Naive thymus-derived CD4-positive, alpha-beta T cell (primary cell): ENCODE measurements at regions of chr1 and their contacts with region 1.

Region 1: GRCh38 chr1:31548907-31549808 is 27.2 kb upstream of the TINAGL1 start:
- DNase-seq: peak; percentile 59 to 89 (median 79)
- ATAC-seq: peak; percentile 99
- H3K4me3 ChIP-seq: no peak overlapping the region
- H3K4me3 Mint-ChIP-seq: peak overlapping the region; percentile 36 to 74 (median 60)
- H3K27ac ChIP-seq: no peak overlapping the region
- H3K27ac Mint-ChIP-seq: peak overlapping the region in 3 of 9 donors; percentile 23 to 68 (median 58)
- H3K4me1 ChIP-seq: peaks cover 5 to 7% of the 10 kb centered on the region in 2 donors
- H3K4me1 Mint-ChIP-seq: peaks cover 0 to 13% (median 9%) of the 10 kb centered on the region in 7 donors
- H3K27me3 ChIP-seq: no peaks in the 10 kb centered on the region
- H3K27me3 Mint-ChIP-seq: peaks cover 5 to 15% (median 13%) of the 10 kb centered on the region in 5 donors

Region 2: DNA sequence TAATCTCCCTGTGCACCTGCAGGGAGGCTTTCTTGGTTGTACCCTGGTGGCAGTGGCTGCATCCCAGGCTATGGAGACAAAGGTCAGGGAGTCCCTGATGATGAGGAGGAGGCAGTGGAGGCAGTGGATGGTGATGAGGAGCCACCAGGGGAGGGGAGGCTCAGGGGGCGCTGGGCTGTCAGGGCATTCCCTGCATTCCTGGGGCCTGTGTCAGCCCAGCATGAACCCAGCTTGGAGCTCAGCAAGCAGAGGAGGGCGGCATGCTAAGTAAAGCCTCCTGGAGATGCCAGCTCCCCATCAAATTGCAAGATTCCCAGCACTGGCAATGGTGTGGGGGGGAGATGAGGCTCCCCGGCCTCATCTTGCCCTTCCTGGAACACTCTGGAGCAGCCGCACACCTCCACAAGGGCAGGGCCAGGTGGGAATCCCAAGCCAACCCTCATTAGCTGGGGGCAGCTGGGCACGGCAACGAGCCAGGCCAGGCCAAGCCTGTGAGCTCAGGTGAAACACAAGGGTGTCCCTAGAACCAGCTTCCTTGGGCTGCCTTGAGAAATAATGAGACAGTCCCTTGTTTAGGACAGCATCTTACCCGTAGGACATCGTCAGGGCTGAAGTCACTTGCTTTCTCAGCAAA is 1295.2 kb before region 1 on chr1:
- CTCF ChIA-PET with region 1: no interaction called
- POLR2A ChIA-PET with region 1: no interaction called
- intact Hi-C with region 1: no loop called
- DNase-seq: no peak
- ATAC-seq: no peak
- H3K4me3 ChIP-seq: no peak overlapping the region
- H3K4me3 Mint-ChIP-seq: no peak overlapping the region
- H3K27ac ChIP-seq: no peak overlapping the region
- H3K27ac Mint-ChIP-seq: no peak overlapping the region
- H3K4me1 ChIP-seq: no peaks in the 10 kb centered on the region
- H3K4me1 Mint-ChIP-seq: no peaks in the 10 kb centered on the region
- H3K27me3 ChIP-seq: no peaks in the 10 kb centered on the region
- H3K27me3 Mint-ChIP-seq: peaks cover 4 to 32% (median 9%) of the 10 kb centered on the region in 5 donors

Region 3: DNA sequence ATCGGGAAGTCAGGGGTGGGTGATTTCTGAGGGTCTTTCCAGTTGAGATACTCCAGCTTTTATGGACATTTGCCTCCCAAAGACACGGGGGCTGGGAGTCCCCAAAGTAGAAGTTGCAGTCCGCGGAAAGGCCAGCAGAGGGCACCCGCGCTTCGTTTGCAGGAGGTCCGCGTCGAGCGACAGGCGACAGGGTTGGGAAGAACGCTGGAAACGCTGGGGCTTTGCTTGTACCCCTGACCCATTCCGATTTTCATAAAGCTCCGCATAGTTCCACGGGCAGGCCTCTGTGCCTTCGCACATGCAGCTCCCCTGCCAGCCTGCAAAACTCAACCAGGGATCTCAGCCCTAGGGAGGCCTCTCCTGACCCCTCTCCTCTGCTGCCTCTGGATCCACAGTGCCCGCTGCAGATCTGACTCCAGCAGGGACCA is 747.4 kb before region 1 on chr1:
- CTCF ChIA-PET with region 1: no interaction called
- POLR2A ChIA-PET with region 1: no interaction called
- intact Hi-C with region 1: loop called in 1 of 2 experiments (anchors 1 kb)
- DNase-seq: peak; percentile 47 to 85 (median 70)
- ATAC-seq: peak; percentile 85
- H3K4me3 ChIP-seq: no peak overlapping the region
- H3K4me3 Mint-ChIP-seq: peak overlapping the region in 4 of 10 donors; percentile 25 to 66 (median 42)
- H3K27ac ChIP-seq: no peak overlapping the region
- H3K27ac Mint-ChIP-seq: peak overlapping the region in 1 of 9 donors; percentile 69
- H3K4me1 ChIP-seq: no peaks in the 10 kb centered on the region
- H3K4me1 Mint-ChIP-seq: peaks cover 0 to 9% (median 4%) of the 10 kb centered on the region in 7 donors
- H3K27me3 ChIP-seq: peaks cover 0 to 5% of the 10 kb centered on the region in 2 donors
- H3K27me3 Mint-ChIP-seq: peaks cover 25 to 48% (median 29%) of the 10 kb centered on the region in 5 donors

Region 4: GRCh38 chr1:31166462-31166861 is 382.7 kb before region 1 on chr1:
- CTCF ChIA-PET with region 1: interaction called, 3 read pairs
- POLR2A ChIA-PET with region 1: no interaction called
- intact Hi-C with region 1: loop called (anchors 1 to 5 kb)
- DNase-seq: no peak
- ATAC-seq: no peak
- H3K4me3 ChIP-seq: no peak overlapping the region
- H3K4me3 Mint-ChIP-seq: no peak overlapping the region
- H3K27ac ChIP-seq: no peak overlapping the region
- H3K27ac Mint-ChIP-seq: no peak overlapping the region
- H3K4me1 ChIP-seq: no peaks in the 10 kb centered on the region
- H3K4me1 Mint-ChIP-seq: peaks cover 3 to 17% (median 5%) of the 10 kb centered on the region in 7 donors
- H3K27me3 ChIP-seq: no peaks in the 10 kb centered on the region
- H3K27me3 Mint-ChIP-seq: peaks cover 4 to 10% (median 6%) of the 10 kb centered on the region in 5 donors

Region 5: DNA sequence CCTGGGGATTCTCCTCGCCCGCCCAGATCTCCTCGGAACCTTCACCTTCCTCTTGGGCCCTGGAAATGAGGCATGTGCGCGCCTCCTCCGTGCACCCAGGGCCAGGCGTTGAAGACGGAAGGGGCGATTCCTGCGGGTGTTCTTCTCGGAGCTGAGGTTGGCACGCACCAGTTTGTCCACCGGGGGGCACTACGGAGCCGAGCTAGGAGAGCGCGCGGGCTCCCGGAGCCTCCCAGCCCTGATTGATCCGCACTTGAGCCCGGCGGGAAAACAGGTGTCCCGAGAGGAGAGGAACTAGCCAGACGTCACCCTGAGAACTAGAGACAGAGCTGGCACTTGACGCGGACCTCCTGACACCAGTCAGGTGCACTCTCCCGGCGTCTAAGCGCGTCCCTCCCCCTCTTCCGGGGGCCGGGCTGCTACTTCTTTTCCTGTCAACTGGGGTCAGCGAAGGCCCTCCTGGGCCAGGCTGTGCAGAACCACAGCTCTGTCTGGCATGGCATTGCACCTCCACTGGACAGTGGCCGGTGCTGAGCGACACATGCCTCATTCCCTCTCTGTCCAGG is 154.4 kb before region 1 on chr1:
- CTCF ChIA-PET with region 1: interaction called, 9 read pairs
- POLR2A ChIA-PET with region 1: no interaction called
- intact Hi-C with region 1: loop called in 1 of 2 experiments (anchors 1 kb)
- DNase-seq: peak; percentile 48 to 83 (median 65)
- ATAC-seq: peak; percentile 96
- H3K4me3 ChIP-seq: peak overlapping the region; percentile 75
- H3K4me3 Mint-ChIP-seq: peak overlapping the region; percentile 84 to 90 (median 88)
- H3K27ac ChIP-seq: no peak overlapping the region
- H3K27ac Mint-ChIP-seq: peak overlapping the region in 4 of 9 donors; percentile 18 to 75 (median 52)
- H3K4me1 ChIP-seq: peaks cover 0 to 4% of the 10 kb centered on the region in 2 donors
- H3K4me1 Mint-ChIP-seq: peaks cover 0 to 14% (median 12%) of the 10 kb centered on the region in 7 donors
- H3K27me3 ChIP-seq: no peaks in the 10 kb centered on the region
- H3K27me3 Mint-ChIP-seq: peaks cover 0 to 8% (median 0%) of the 10 kb centered on the region in 5 donors

Region 6: GRCh38 chr1:31460027-31460426 is 89.1 kb before region 1 on chr1:
- CTCF ChIA-PET with region 1: no interaction called
- POLR2A ChIA-PET with region 1: no interaction called
- intact Hi-C with region 1: loop called in 1 of 2 experiments (anchors 2 kb)
- DNase-seq: no peak
- ATAC-seq: no peak
- H3K4me3 ChIP-seq: no peak overlapping the region
- H3K4me3 Mint-ChIP-seq: no peak overlapping the region
- H3K27ac ChIP-seq: no peak overlapping the region
- H3K27ac Mint-ChIP-seq: no peak overlapping the region
- H3K4me1 ChIP-seq: no peaks in the 10 kb centered on the region
- H3K4me1 Mint-ChIP-seq: no peaks in the 10 kb centered on the region
- H3K27me3 ChIP-seq: no peaks in the 10 kb centered on the region
- H3K27me3 Mint-ChIP-seq: peaks cover 22 to 51% (median 33%) of the 10 kb centered on the region in 5 donors

Region 7: GRCh38 chr1:31523769-31524168 is 25.4 kb before region 1 on chr1:
- CTCF ChIA-PET with region 1: no interaction called
- POLR2A ChIA-PET with region 1: no interaction called
- intact Hi-C with region 1: no loop called
- DNase-seq: no peak
- ATAC-seq: peak; percentile 94
- H3K4me3 ChIP-seq: no peak overlapping the region
- H3K4me3 Mint-ChIP-seq: no peak overlapping the region
- H3K27ac ChIP-seq: no peak overlapping the region
- H3K27ac Mint-ChIP-seq: no peak overlapping the region
- H3K4me1 ChIP-seq: no peaks in the 10 kb centered on the region
- H3K4me1 Mint-ChIP-seq: peaks cover 0 to 7% (median 0%) of the 10 kb centered on the region in 7 donors
- H3K27me3 ChIP-seq: no peaks in the 10 kb centered on the region
- H3K27me3 Mint-ChIP-seq: peaks cover 0 to 14% (median 10%) of the 10 kb centered on the region in 5 donors

Region 8: GRCh38 chr1:31923901-31924535 is 374.9 kb after region 1 on chr1:
- CTCF ChIA-PET with region 1: no interaction called
- POLR2A ChIA-PET with region 1: no interaction called
- intact Hi-C with region 1: no loop called
- DNase-seq: peak in 1 of 9 donors; percentile 26
- ATAC-seq: no peak
- H3K4me3 ChIP-seq: no peak overlapping the region
- H3K4me3 Mint-ChIP-seq: peak overlapping the region in 9 of 10 donors; percentile 55 to 94 (median 68)
- H3K27ac ChIP-seq: peak overlapping the region; percentile 50
- H3K27ac Mint-ChIP-seq: peak overlapping the region; percentile 13 to 88 (median 66)
- H3K4me1 ChIP-seq: peaks cover 53 to 61% of the 10 kb centered on the region in 2 donors
- H3K4me1 Mint-ChIP-seq: peaks cover 65 to 87% (median 76%) of the 10 kb centered on the region in 7 donors
- H3K27me3 ChIP-seq: no peaks in the 10 kb centered on the region
- H3K27me3 Mint-ChIP-seq: no peaks in the 10 kb centered on the region